B cell (primary cell): ENCODE measurements at regions of chr4 and their contacts with region 1.

Region 1: GRCh38 chr4:21790438-21791029 is 158.0 kb downstream of the KCNIP4 start:
- DNase-seq: no peak
- ATAC-seq: no peak
- H3K4me3 ChIP-seq: no peak overlapping the region
- H3K4me3 Mint-ChIP-seq: no peak overlapping the region
- H3K27ac ChIP-seq: no peak overlapping the region
- H3K27ac Mint-ChIP-seq: no peak overlapping the region
- H3K4me1 ChIP-seq: no peaks in the 10 kb centered on the region
- H3K4me1 Mint-ChIP-seq: no peaks in the 10 kb centered on the region
- H3K27me3 ChIP-seq: no peaks in the 10 kb centered on the region
- H3K27me3 Mint-ChIP-seq: no peaks in the 10 kb centered on the region
- CTCF ChIP-seq: peak; percentile 37

Region 2: GRCh38 chr4:21413809-21414370 is 376.6 kb before region 1 on chr4:
- CTCF ChIA-PET with region 1: no interaction called
- POLR2A ChIA-PET with region 1: no interaction called
- intact Hi-C with region 1: no loop called
- DNase-seq: no peak
- ATAC-seq: no peak
- H3K4me3 ChIP-seq: no peak overlapping the region
- H3K4me3 Mint-ChIP-seq: no peak overlapping the region
- H3K27ac ChIP-seq: no peak overlapping the region
- H3K27ac Mint-ChIP-seq: no peak overlapping the region
- H3K4me1 ChIP-seq: no peaks in the 10 kb centered on the region
- H3K4me1 Mint-ChIP-seq: no peaks in the 10 kb centered on the region
- H3K27me3 ChIP-seq: no peaks in the 10 kb centered on the region
- H3K27me3 Mint-ChIP-seq: no peaks in the 10 kb centered on the region
- CTCF ChIP-seq: no peak

Region 3: GRCh38 chr4:22389240-22389870 is 598.8 kb after region 1 on chr4:
- CTCF ChIA-PET with region 1: interaction called, 8 read pairs
- POLR2A ChIA-PET with region 1: no interaction called
- intact Hi-C with region 1: loop called (anchors 5 kb)
- DNase-seq: peak; percentile 9
- ATAC-seq: no peak
- H3K4me3 ChIP-seq: no peak overlapping the region
- H3K4me3 Mint-ChIP-seq: no peak overlapping the region
- H3K27ac ChIP-seq: no peak overlapping the region
- H3K27ac Mint-ChIP-seq: no peak overlapping the region
- H3K4me1 ChIP-seq: no peaks in the 10 kb centered on the region
- H3K4me1 Mint-ChIP-seq: no peaks in the 10 kb centered on the region
- H3K27me3 ChIP-seq: no peaks in the 10 kb centered on the region
- H3K27me3 Mint-ChIP-seq: no peaks in the 10 kb centered on the region
- CTCF ChIP-seq: peak; percentile 52